ENCODE measurements at regions of chr20 and their contacts with region 1.

Region 1: DNA sequence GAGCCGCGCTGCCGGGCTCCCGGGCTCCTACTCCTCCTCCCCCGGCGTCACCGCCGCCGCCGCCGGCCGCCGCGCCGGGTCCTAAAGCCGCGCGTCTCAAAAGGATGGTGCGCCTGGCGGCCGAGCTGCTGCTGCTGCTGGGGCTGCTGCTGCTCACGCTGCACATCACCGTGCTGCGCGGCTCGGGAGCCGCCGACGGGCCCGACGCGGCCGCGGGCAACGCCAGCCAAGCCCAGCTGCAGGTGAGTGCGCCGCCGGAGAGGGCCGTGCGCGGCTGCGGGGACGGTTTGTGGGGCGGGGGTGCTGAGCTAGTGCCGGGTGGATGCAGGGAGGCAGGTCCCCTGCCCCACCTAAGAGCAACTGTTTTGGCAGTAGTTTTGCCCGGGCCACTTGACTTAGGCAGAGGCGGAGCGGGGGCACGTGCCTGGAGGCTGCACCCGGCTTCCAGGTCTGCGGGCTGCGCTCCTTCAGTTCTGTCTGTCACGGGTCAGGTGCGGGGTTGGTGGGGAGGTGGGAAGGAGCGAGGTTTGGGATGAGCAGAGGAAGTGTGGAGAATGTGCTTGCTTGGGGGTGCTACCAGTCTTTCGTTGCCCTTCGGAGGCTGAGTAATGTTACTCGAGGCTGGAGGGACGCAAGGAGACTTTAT is 722 bp downstream of the ISM1 start:
- DNase-seq: peak; percentile 29 to 65 (median 39)
- ATAC-seq: peak in 3 of 4 donors; percentile 57 to 80 (median 79)
- H3K4me3 ChIP-seq: peak overlapping the region; percentile 26 to 67 (median 58)
- H3K27ac ChIP-seq: peak overlapping the region in 8 of 12 donors; percentile 5 to 61 (median 38)
- H3K4me1 ChIP-seq: peaks cover 0 to 28% (median 11%) of the 10 kb centered on the region in 12 donors
- H3K27me3 ChIP-seq: peaks cover 8 to 57% (median 41%) of the 10 kb centered on the region in 9 donors
- CTCF ChIP-seq: peak in 1 of 12 donors; percentile 17
- POLR2A ChIP-seq: no peak

Region 2: GRCh38 chr20:13119583-13119982 is 102.2 kb before region 1 on chr20:
- intact Hi-C with region 1: no loop called
- DNase-seq: peak in 1 of 5 donors; percentile 17
- ATAC-seq: peak in 3 of 4 donors; percentile 72 to 83 (median 72)
- H3K4me3 ChIP-seq: no peak overlapping the region
- H3K27ac ChIP-seq: no peak overlapping the region
- H3K4me1 ChIP-seq: no peaks in the 10 kb centered on the region
- H3K27me3 ChIP-seq: no peaks in the 10 kb centered on the region
- CTCF ChIP-seq: peak; percentile 80 to 91 (median 86)
- POLR2A ChIP-seq: no peak

Region 3: DNA sequence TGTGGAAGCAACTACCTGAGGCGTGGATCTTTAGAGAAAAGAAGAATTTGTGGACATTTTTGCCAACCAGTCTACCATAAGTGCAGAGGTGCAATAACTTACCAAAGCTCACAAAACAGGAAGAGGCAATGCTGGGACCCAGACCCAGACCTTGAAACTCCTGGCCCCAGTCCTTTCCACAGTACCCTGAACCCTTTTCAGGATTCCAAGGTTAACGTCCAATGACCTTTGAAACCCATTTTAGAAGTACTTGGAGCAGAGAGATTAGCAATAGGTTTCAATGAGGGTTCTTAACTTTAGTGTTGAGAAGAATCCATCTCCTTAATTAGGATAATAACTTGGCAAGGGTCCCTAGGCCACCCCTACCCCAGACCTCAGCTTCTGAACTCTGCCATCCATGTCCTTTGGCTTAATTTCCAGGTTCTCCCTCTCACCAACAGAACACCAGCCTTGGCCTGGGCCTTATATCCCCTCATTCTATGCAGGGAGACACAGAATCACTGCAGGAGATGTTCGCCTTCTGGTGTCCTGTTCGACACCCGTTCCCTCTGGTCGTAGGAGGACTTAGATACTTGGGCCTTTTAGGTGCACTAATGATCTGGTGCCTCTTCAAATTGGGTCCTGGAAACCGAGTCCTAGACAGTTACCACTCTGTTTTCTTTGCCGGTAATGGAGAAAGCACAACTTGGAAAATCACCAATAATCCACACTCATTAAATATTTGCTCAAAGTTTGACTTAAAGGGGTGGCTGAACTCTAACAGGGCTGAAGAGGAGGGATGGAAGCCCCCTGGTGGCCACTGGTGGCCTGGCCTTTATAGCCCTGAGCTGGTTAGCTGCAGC is 39.9 kb after region 1 on chr20:
- intact Hi-C with region 1: loop called in 2 of 10 experiments (anchors 5 kb)
- DNase-seq: peak in 3 of 5 donors; percentile 37 to 53 (median 49)
- ATAC-seq: peak; percentile 55 to 83 (median 69)
- H3K4me3 ChIP-seq: no peak overlapping the region
- H3K27ac ChIP-seq: no peak overlapping the region
- H3K4me1 ChIP-seq: peaks cover 0 to 4% (median 0%) of the 10 kb centered on the region in 12 donors
- H3K27me3 ChIP-seq: no peaks in the 10 kb centered on the region
- CTCF ChIP-seq: peak; percentile 57 to 79 (median 70)
- POLR2A ChIP-seq: no peak

Region 4: DNA sequence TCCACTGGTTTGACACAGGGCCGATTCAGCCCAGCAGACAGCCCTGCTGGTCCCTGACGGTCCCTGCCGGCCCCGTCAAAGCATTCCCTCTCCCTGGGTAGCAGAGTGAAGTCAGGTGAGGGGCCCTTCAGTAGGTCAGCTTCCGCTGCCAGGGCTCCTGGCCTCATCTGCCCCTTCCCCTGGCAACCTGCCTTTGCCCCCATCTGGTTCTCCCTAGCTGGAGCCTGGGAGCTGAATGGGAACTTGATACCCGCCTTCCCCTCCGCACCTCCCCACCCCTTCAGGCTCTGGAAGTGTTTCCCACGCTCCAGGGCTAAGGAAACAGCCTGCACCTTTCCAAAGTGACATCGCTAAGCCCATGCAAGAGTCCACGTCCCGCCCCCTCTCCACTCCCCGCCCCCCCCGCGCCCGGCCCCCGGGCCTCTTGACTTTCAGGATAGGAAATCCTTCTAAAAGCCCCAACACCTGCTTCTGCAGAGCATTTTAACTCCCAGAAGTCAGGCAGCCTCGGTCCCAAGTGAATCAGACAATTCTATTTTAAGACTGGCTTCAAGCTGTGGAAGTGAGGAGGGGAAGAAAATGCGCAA is 52.6 kb after region 1 on chr20:
- intact Hi-C with region 1: loop called in 1 of 10 experiments (anchors 5 kb)
- DNase-seq: peak in 2 of 5 donors; percentile 24 to 42
- ATAC-seq: peak in 2 of 4 donors; percentile 52
- H3K4me3 ChIP-seq: peak overlapping the region in 1 of 12 donors; percentile 11
- H3K27ac ChIP-seq: peak overlapping the region in 3 of 12 donors; percentile 36 to 53 (median 50)
- H3K4me1 ChIP-seq: peaks cover 0 to 31% (median 7%) of the 10 kb centered on the region in 12 donors
- H3K27me3 ChIP-seq: no peaks in the 10 kb centered on the region
- CTCF ChIP-seq: no peak
- POLR2A ChIP-seq: no peak